ENCODE measurements at regions of chr4 and their contacts with region 1.

Region 1: GRCh38 chr4:158172261-158173258 is at the start of gene GASK1B:
- DNase-seq: peak; percentile 68
- H3K4me3 Mint-ChIP-seq: peak within 1 kb of the TSS; percentile 71
- H3K27ac Mint-ChIP-seq: peak within 1 kb of the TSS; percentile 62
- H3K4me1 Mint-ChIP-seq: peaks cover 42% of the 10 kb centered on the region
- H3K27me3 Mint-ChIP-seq: no peaks in the 10 kb centered on the region
- CTCF ChIP-seq: peak; percentile 72
- total RNA-seq, gene GASK1B: 7.2 and 9.7 TPM in 2 replicates

Region 2: DNA sequence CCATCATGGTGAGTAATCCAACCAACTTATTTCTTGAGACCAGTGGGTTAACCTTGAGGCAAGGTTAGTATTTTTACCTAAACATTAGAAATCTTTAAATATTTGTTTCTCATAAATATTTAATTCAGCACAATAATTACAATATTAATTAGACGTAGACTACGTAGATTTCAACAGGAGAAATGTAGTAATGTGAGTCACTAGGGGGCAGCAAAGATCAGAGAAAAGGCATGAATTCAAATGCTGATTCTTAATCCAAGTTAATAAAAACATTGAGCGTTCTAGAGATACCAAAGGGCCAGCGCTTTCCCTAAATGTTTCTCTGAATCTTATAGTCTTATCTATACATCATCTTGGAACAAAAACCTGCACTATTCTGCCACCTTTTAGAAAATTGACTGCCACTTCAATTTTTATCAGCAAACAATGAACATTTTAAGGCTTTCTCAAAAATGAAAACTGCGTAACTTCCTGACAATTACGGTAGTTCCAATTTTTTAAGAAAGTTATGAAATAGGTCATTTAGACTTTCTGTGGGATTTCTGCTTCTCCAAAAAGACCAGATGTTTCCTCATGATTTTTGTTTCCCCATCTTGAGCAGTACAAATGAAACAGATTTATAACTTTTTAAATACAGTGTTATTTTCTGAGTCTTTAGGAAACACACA is 180.4 kb before region 1 on chr4:
- CTCF ChIA-PET with region 1: interaction called, 71 read pairs
- POLR2A ChIA-PET with region 1: interaction called, 10 read pairs
- intact Hi-C with region 1: loop called (anchors 1 kb)
- DNase-seq: peak; percentile 79
- H3K4me3 Mint-ChIP-seq: no peak overlapping the region
- H3K27ac Mint-ChIP-seq: no peak overlapping the region
- H3K4me1 Mint-ChIP-seq: no peaks in the 10 kb centered on the region
- H3K27me3 Mint-ChIP-seq: no peaks in the 10 kb centered on the region
- CTCF ChIP-seq: peak; percentile 72

Region 3: GRCh38 chr4:158008551-158009218 is 163.9 kb before region 1 on chr4:
- CTCF ChIA-PET with region 1: interaction called, 13 read pairs
- POLR2A ChIA-PET with region 1: interaction called, 4 read pairs
- intact Hi-C with region 1: no loop called
- DNase-seq: peak; percentile 57
- H3K4me3 Mint-ChIP-seq: no peak overlapping the region
- H3K27ac Mint-ChIP-seq: no peak overlapping the region
- H3K4me1 Mint-ChIP-seq: peaks cover 10% of the 10 kb centered on the region
- H3K27me3 Mint-ChIP-seq: no peaks in the 10 kb centered on the region
- CTCF ChIP-seq: no peak

Region 4: GRCh38 chr4:158121187-158121586 is 51.4 kb before region 1 on chr4:
- CTCF ChIA-PET with region 1: interaction called, 3 read pairs
- POLR2A ChIA-PET with region 1: interaction called, 14 read pairs
- intact Hi-C with region 1: loop called (anchors 5 kb)
- DNase-seq: peak; percentile 68
- H3K4me3 Mint-ChIP-seq: no peak overlapping the region
- H3K27ac Mint-ChIP-seq: peak overlapping the region; percentile 21
- H3K4me1 Mint-ChIP-seq: peaks cover 12% of the 10 kb centered on the region
- H3K27me3 Mint-ChIP-seq: no peaks in the 10 kb centered on the region
- CTCF ChIP-seq: no peak

Region 5: DNA sequence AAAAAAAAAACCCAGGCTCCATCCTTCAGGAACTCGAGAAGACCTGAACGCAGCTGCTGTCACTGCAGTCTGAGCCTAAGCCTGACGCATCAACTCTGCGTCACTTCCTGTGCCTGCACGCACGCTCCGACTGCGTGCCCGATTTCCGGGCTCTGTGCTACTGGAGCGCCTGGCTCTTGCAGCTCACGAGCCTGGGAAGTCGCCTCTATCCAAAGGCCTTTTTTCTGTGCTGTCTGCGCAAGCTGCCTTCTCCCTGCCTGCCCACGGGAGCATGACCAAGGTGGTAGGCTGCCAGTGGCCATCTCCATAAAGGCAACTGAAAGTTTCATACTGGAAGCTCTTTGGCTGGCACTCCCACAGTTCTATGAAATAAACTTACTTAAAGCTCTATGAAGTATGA is 10.2 kb after region 1 on chr4:
- CTCF ChIA-PET with region 1: interaction called, 16 read pairs
- POLR2A ChIA-PET with region 1: no interaction called
- intact Hi-C with region 1: no loop called
- DNase-seq: no peak
- H3K4me3 Mint-ChIP-seq: no peak overlapping the region
- H3K27ac Mint-ChIP-seq: no peak overlapping the region
- H3K4me1 Mint-ChIP-seq: no peaks in the 10 kb centered on the region
- H3K27me3 Mint-ChIP-seq: no peaks in the 10 kb centered on the region
- CTCF ChIP-seq: no peak

Region 6: GRCh38 chr4:158484173-158484885 is 311.8 kb after region 1 on chr4:
- CTCF ChIA-PET with region 1: no interaction called
- POLR2A ChIA-PET with region 1: no interaction called
- intact Hi-C with region 1: no loop called
- DNase-seq: no peak
- H3K4me3 Mint-ChIP-seq: no peak overlapping the region
- H3K27ac Mint-ChIP-seq: peak overlapping the region; percentile 7
- H3K4me1 Mint-ChIP-seq: peaks cover 11% of the 10 kb centered on the region
- H3K27me3 Mint-ChIP-seq: no peaks in the 10 kb centered on the region
- CTCF ChIP-seq: no peak